Activated B cell treated with CpG ODN at 0.5 μM for 24 hours (primary cell): ENCODE measurements at regions of chr9 and their contacts with region 1.

Region 1: GRCh38 chr9:107282753-107283625 is at the start of gene RAD23B:
- DNase-seq: peak; percentile 99
- ATAC-seq: peak; percentile 82
- H3K4me3 Mint-ChIP-seq: peak within 1 kb of the TSS; percentile 91
- H3K27ac Mint-ChIP-seq: peak within 1 kb of the TSS; percentile 93
- H3K4me1 Mint-ChIP-seq: peaks cover 64% of the 10 kb centered on the region
- H3K27me3 Mint-ChIP-seq: no peaks in the 10 kb centered on the region
- CTCF ChIP-seq: no peak
- total RNA-seq, gene RAD23B: 75.3 and 82.6 TPM in 2 replicates

Region 2: GRCh38 chr9:107020040-107020530 is 262.9 kb before region 1 on chr9:
- CTCF ChIA-PET with region 1: no interaction called
- POLR2A ChIA-PET with region 1: no interaction called
- intact Hi-C with region 1: no loop called
- DNase-seq: no peak
- ATAC-seq: no peak
- H3K4me3 Mint-ChIP-seq: no peak overlapping the region
- H3K27ac Mint-ChIP-seq: no peak overlapping the region
- H3K4me1 Mint-ChIP-seq: peaks cover 10% of the 10 kb centered on the region
- H3K27me3 Mint-ChIP-seq: no peaks in the 10 kb centered on the region
- CTCF ChIP-seq: no peak

Region 3: DNA sequence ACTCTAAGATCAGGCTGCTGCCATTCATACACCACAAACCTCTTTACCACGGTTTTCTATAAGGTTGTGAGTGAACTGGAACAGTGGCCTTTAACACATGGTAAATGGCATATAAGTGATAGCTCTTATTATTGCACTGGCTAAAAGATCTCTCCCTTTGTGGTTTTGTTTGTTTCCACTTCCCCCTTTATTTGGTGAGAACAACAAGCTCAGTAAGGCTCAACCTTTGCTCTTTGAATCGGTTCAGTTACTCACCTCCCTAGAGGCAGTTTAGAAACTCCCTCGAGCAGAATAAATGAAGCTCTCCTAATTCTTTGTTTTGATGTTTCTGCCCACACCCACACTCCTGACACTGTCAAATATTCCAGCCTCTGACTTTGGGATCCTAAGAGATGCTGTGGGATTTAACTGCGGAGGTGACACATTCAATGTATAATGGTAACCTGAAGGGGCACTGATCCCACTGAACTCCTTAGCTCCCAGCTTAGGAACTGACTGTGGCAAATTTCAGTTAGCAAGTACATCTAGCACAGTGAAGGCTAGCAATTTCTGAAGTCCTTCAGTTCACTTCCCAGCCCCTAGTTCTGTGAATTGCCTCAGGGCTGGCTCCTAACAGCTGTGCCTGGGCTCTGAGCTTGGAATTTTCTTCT is 22.4 kb before region 1 on chr9:
- CTCF ChIA-PET with region 1: interaction called, 7 read pairs
- POLR2A ChIA-PET with region 1: interaction called, 77 read pairs
- intact Hi-C with region 1: loop called (anchors 1 kb)
- DNase-seq: peak; percentile 17
- ATAC-seq: peak; percentile 98
- H3K4me3 Mint-ChIP-seq: peak overlapping the region; percentile 53
- H3K27ac Mint-ChIP-seq: peak overlapping the region; percentile 67
- H3K4me1 Mint-ChIP-seq: peaks cover 26% of the 10 kb centered on the region
- H3K27me3 Mint-ChIP-seq: peaks cover 3% of the 10 kb centered on the region
- CTCF ChIP-seq: no peak

Region 4: GRCh38 chr9:107316795-107317661 is 34.0 kb after region 1 on chr9:
- CTCF ChIA-PET with region 1: no interaction called
- POLR2A ChIA-PET with region 1: interaction called, 4 read pairs
- intact Hi-C with region 1: loop called (anchors 5 kb)
- DNase-seq: no peak
- ATAC-seq: peak; percentile 34
- H3K4me3 Mint-ChIP-seq: no peak overlapping the region
- H3K27ac Mint-ChIP-seq: peak overlapping the region; percentile 5
- H3K4me1 Mint-ChIP-seq: peaks cover 52% of the 10 kb centered on the region
- H3K27me3 Mint-ChIP-seq: no peaks in the 10 kb centered on the region
- CTCF ChIP-seq: no peak

Region 5: GRCh38 chr9:107489687-107490605 is 207.0 kb after region 1 on chr9 and contains the start of gene KLF4:
- CTCF ChIA-PET with region 1: no interaction called
- POLR2A ChIA-PET with region 1: no interaction called
- intact Hi-C with region 1: loop called (anchors 2 kb)
- DNase-seq: peak; percentile 68
- ATAC-seq: peak; percentile 73
- H3K4me3 Mint-ChIP-seq: peak within 1 kb of the TSS; percentile 78
- H3K27ac Mint-ChIP-seq: no peak within 1 kb of the TSS
- H3K4me1 Mint-ChIP-seq: peaks cover 28% of the 10 kb centered on the region
- H3K27me3 Mint-ChIP-seq: peaks cover 46% of the 10 kb centered on the region
- CTCF ChIP-seq: no peak
- total RNA-seq, gene KLF4: 1.0 TPM in 2 replicates

Region 6: GRCh38 chr9:108933718-108934322 is 1650.8 kb after region 1 on chr9 and contains the start of gene ELP1:
- CTCF ChIA-PET with region 1: no interaction called
- POLR2A ChIA-PET with region 1: no interaction called
- intact Hi-C with region 1: loop called (anchors 1 kb)
- DNase-seq: peak; percentile 86
- ATAC-seq: peak; percentile 83
- H3K4me3 Mint-ChIP-seq: peak within 1 kb of the TSS; percentile 97
- H3K27ac Mint-ChIP-seq: peak within 1 kb of the TSS; percentile 89
- H3K4me1 Mint-ChIP-seq: peaks cover 23% of the 10 kb centered on the region
- H3K27me3 Mint-ChIP-seq: no peaks in the 10 kb centered on the region
- CTCF ChIP-seq: no peak
- total RNA-seq, gene ELP1: 20.3 and 25.0 TPM in 2 replicates

Region 7: GRCh38 chr9:109119439-109120203 is 1836.6 kb after region 1 on chr9 and contains the start of gene TMEM245:
- CTCF ChIA-PET with region 1: no interaction called
- POLR2A ChIA-PET with region 1: no interaction called
- intact Hi-C with region 1: loop called (anchors 10 kb)
- DNase-seq: peak; percentile 86
- ATAC-seq: peak; percentile 95
- H3K4me3 Mint-ChIP-seq: peak within 1 kb of the TSS; percentile 88
- H3K27ac Mint-ChIP-seq: peak within 1 kb of the TSS; percentile 82
- H3K4me1 Mint-ChIP-seq: peaks cover 36% of the 10 kb centered on the region
- H3K27me3 Mint-ChIP-seq: no peaks in the 10 kb centered on the region
- CTCF ChIP-seq: no peak
- total RNA-seq, gene TMEM245: 16.1 and 20.6 TPM in 2 replicates